ENCODE measurements at regions of chr1 and their contacts with region 1.

Region 1: GRCh38 chr1:26169669-26170471 is at the start of gene ZNF593:
- DNase-seq: peak; percentile 89 to 95 (median 94)
- H3K4me3 ChIP-seq: peak within 1 kb of the TSS; percentile 59 to 93 (median 68)
- H3K4me3 Mint-ChIP-seq: peak within 1 kb of the TSS; percentile 89 to 90
- H3K27ac ChIP-seq: peak within 1 kb of the TSS in 1 of 2 donors; percentile 81
- H3K27ac Mint-ChIP-seq: peak within 1 kb of the TSS; percentile 59 to 94 (median 88)
- H3K4me1 ChIP-seq: peaks cover 14 to 19% of the 10 kb centered on the region in 2 donors
- H3K4me1 Mint-ChIP-seq: peaks cover 13% of the 10 kb centered on the region
- H3K27me3 ChIP-seq: peaks cover 0 to 6% of the 10 kb centered on the region in 2 donors
- H3K27me3 Mint-ChIP-seq: peaks cover 8 to 13% (median 11%) of the 10 kb centered on the region in 3 donors
- CTCF ChIP-seq: peak; percentile 90
- polyA plus RNA-seq, gene ZNF593: 23.6 to 36.5 (median 27.8) TPM

Region 2: DNA sequence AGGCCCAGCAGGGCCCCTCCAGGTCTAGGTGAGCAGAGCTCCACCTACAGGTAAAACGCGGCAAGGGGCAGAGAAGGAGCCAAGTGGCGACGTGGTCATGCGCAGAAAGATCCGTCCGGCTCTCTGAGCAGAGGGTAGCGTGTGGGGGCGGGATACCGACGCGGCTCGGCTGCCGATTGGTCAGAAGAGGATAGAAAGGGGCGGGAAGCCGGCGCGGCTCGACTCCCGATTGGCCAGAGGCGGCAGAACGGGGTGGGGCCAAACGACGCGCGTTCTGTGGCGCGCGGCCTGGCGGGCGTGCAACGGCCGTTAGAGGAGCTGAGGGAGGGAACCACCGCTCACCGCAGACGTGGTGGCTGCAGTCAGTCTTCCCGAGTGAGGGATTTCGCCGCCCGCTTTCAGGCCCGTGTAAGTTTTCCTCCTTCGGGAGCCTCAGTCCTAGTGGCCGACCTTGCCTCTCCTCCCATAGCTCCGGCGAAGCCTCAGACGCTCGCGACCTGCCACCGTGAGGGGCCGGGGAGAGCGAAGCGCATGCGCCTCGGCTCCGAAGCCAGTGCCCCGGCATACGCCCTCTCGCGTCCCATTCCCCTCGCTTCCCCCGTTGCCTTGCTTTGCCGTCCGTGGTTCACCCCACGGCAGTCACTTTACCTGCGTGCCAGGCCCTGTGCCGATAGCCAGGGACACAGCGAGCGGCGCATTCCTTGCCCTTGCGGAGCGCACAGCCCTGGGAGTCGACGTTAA is 64.2 kb after region 1 on chr1 and contains the start of gene CEP85:
- intact Hi-C with region 1: loop called in 1 of 2 experiments (anchors 5 kb)
- DNase-seq: peak; percentile 95 to 97 (median 97)
- H3K4me3 ChIP-seq: peak within 1 kb of the TSS; percentile 65 to 98 (median 81)
- H3K4me3 Mint-ChIP-seq: peak within 1 kb of the TSS; percentile 99
- H3K27ac ChIP-seq: peak within 1 kb of the TSS; percentile 70 to 98
- H3K27ac Mint-ChIP-seq: peak within 1 kb of the TSS; percentile 91 to 97 (median 96)
- H3K4me1 ChIP-seq: peaks cover 29 to 39% of the 10 kb centered on the region in 2 donors
- H3K4me1 Mint-ChIP-seq: peaks cover 32% of the 10 kb centered on the region
- H3K27me3 ChIP-seq: no peaks in the 10 kb centered on the region
- H3K27me3 Mint-ChIP-seq: peaks cover 0 to 2% (median 2%) of the 10 kb centered on the region in 3 donors
- CTCF ChIP-seq: peak; percentile 52
- polyA plus RNA-seq, gene CEP85: 8.2 to 32.5 (median 10.9) TPM

Measured in CD14-positive monocyte (primary cell).